ENCODE measurements at regions of chr6 and their contacts with region 1.

Region 1: DNA sequence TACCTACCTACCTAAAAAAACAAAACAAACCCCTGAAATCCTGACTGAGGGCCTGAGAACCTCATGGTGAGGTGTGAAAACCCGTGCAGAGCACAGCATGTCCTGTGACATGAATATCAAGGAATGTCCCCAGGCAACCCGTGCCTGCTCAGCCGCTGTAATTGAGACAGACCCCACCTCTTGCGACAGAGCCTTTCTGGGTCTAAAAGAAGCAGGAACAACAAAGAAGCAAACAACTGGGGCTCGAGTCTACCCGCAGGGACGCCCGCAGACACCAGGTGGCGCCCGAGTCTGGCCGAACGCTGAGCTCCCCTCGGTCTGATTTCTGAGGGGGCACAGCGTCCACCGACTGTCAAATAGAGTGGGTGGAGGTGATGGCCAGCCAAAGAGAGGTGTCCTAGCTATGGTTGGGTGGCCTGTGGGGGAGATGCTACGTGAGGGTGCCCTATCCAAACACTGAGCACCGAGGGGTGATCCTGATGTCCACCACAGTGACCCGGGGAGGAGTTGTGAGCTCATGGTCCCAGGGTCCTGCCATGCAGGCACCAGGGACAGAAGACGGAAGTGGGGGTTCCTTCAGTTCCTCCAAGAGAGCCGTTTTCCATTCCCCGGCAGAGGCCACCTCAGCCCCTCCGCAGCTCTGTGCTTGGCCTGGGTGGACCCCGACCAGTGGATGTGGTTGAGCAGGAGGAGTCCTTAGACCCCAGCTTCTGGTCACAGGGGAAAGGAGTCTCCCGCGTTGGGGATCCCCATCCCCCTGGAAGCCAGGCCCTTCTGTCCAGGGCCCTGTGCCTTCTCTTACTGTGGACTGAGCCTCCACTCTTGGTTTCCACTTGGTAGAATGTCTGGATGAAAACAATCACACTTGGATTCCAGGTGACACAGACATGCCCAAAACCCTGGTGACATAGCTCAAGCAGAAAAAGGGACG is 268.2 kb downstream of the CDC5L start:
- DNase-seq: peak; percentile 28
- ATAC-seq: peak; percentile 70
- H3K4me3 ChIP-seq: no peak overlapping the region
- H3K27ac ChIP-seq: no peak overlapping the region
- H3K4me1 ChIP-seq: peaks cover 10% of the 10 kb centered on the region
- H3K27me3 ChIP-seq: no peaks in the 10 kb centered on the region
- CTCF ChIP-seq: peak; percentile 90
- POLR2A ChIP-seq: no peak
- RAD21 ChIP-seq: peak; percentile 93

Region 2: DNA sequence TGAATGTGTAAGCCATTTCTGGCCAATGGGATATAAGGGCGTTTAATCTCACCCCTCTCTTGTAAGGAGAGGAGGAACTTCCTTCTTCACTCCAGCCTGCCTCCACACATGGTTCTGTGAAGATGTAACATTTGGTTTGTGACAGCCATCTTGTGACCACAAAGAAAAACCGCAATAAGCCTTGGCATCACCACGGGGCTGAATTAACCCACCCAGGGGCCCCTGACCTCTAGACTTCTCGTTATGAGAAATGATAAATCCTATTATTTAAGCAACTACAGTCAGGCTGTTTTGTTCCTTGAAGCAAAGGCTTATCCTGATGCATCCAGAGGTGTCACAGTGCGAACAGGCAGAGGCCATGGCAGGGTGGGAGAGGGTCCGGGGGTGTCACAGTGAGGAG is 128.5 kb before region 1 on chr6:
- CTCF ChIA-PET with region 1: no interaction called
- POLR2A ChIA-PET with region 1: no interaction called
- dilution Hi-C with region 1: no loop called
- in situ Hi-C with region 1: no loop called
- intact Hi-C with region 1: no loop called
- DNase-seq: no peak
- ATAC-seq: no peak
- H3K4me3 ChIP-seq: no peak overlapping the region
- H3K27ac ChIP-seq: no peak overlapping the region
- H3K4me1 ChIP-seq: no peaks in the 10 kb centered on the region
- H3K27me3 ChIP-seq: peaks cover 49% of the 10 kb centered on the region
- CTCF ChIP-seq: no peak
- POLR2A ChIP-seq: no peak
- RAD21 ChIP-seq: no peak

Region 3: GRCh38 chr6:44800171-44800783 is 144.6 kb after region 1 on chr6:
- CTCF ChIA-PET with region 1: no interaction called
- POLR2A ChIA-PET with region 1: no interaction called
- dilution Hi-C with region 1: no loop called
- in situ Hi-C with region 1: no loop called
- intact Hi-C with region 1: loop called (anchors 5 kb)
- DNase-seq: peak; percentile 65
- ATAC-seq: peak; percentile 64
- H3K4me3 ChIP-seq: no peak overlapping the region
- H3K27ac ChIP-seq: no peak overlapping the region
- H3K4me1 ChIP-seq: peaks cover 6% of the 10 kb centered on the region
- H3K27me3 ChIP-seq: peaks cover 32% of the 10 kb centered on the region
- CTCF ChIP-seq: no peak
- POLR2A ChIP-seq: no peak
- RAD21 ChIP-seq: no peak

Region 4: DNA sequence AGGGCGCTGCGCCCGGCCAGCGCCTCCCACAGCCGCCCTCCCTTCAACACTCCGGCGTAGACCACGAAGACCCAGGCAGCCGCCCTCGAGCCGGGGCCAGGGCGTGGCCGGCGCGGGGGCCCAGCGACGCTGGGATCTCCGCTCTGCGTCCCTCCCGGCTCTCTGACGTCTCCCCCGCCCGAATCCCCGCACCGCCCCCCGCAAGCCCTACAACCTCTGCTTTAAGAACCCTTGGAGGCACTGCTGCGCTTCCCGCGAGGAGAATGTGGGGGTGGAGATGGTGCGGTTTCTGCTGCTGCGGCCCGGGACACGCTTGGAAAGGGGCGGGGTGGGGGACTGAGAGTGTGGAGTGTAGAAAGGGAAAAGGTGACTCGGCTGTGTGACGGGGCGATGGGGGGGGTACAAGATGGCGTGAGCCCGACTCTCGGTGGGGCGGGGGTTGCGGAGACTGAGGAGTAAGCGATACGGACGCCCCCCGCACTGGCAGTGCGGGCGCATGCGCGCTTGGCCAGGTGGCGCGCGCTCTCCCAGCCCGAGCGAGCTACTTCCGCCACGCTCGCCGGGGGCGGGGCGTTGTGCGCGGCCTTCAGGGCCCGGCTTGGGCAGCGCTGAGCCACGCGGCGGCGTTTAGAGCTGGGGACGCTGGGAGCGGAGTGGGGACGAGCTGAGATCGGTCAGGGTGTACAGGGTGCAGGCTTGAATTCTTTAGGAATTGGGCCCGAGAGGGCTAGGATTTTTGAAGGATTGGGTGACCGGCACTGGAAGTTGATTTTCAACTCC is 722.1 kb after region 1 on chr6 and contains the start of gene SUPT3H:
- CTCF ChIA-PET with region 1: interaction called, 3 read pairs
- POLR2A ChIA-PET with region 1: no interaction called
- dilution Hi-C with region 1: no loop called
- in situ Hi-C with region 1: no loop called
- intact Hi-C with region 1: loop called (anchors 2 kb)
- DNase-seq: peak; percentile 93
- ATAC-seq: peak; percentile 94
- H3K4me3 ChIP-seq: peak within 1 kb of the TSS; percentile 66
- H3K27ac ChIP-seq: peak within 1 kb of the TSS; percentile 95
- H3K4me1 ChIP-seq: no peaks in the 10 kb centered on the region
- H3K27me3 ChIP-seq: no peaks in the 10 kb centered on the region
- CTCF ChIP-seq: peak; percentile 27; the same call in 1 of the 2 replicates
- POLR2A ChIP-seq: peak; percentile 93
- RAD21 ChIP-seq: peak; percentile 41
- total RNA-seq, gene SUPT3H: 4.2 and 5.0 TPM in 2 replicates